ENCODE measurements at regions of chr9 and their contacts with region 1.

Region 1: GRCh38 chr9:38088006-38088925 is 19.2 kb upstream of the SHB start:
- DNase-seq: peak; percentile 82
- H3K4me3 ChIP-seq: no peak overlapping the region
- H3K27ac ChIP-seq: no peak overlapping the region
- H3K4me1 ChIP-seq: peaks cover 0 to 3% (median 0%) of the 10 kb centered on the region in 4 donors
- H3K27me3 ChIP-seq: no peaks in the 10 kb centered on the region
- CTCF ChIP-seq: peak; percentile 90 to 99 (median 96)
- EP300 ChIP-seq: no peak
- POLR2A ChIP-seq: no peak

Region 2: DNA sequence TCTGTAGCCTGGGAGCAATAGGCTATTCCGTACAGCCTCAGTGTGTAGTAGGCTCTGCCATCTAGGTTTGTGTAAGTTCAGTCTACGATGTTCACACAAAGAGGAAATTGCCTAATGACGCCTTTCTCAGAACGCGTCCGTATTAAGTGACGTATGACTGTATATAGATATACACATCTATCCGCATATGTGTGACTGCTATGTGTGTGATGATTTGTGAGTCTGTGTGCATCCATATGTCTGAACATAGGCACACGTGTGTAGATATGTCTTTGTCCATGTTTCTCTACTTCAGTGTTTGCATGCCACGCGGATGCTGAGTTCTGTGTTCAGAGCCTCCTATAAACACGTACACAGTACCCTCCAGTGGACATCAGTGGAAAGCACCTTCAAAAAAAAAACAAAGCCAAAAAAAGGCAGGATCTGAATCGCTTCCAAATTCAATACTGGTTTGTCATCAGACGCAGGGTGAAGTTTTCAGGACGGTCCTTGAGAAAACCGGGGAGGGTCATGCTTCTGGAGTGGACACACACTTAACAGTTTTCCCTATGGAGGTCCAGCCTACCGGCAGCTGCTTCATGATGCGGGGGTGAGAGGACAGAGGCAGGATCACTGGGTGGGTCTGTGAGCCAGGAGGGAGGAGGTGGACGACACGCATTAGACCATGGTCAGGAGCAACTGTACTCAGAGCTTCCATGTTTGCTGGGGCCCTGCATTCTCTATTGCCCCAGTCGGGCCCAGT is 274.8 kb after region 1 on chr9:
- in situ Hi-C with region 1: loop called in 3 of 4 experiments (anchors 25 kb)
- intact Hi-C with region 1: no loop called
- DNase-seq: peak; percentile 22
- H3K4me3 ChIP-seq: no peak overlapping the region
- H3K27ac ChIP-seq: no peak overlapping the region
- H3K4me1 ChIP-seq: peaks cover 0 to 7% (median 1%) of the 10 kb centered on the region in 4 donors
- H3K27me3 ChIP-seq: no peaks in the 10 kb centered on the region
- CTCF ChIP-seq: peak; percentile 38 to 55 (median 46)
- EP300 ChIP-seq: no peak
- POLR2A ChIP-seq: no peak

Region 3: GRCh38 chr9:38417003-38417945 is 329.0 kb after region 1 on chr9:
- in situ Hi-C with region 1: loop called in 1 of 4 experiments (anchors 25 kb)
- intact Hi-C with region 1: no loop called
- DNase-seq: peak; percentile 35
- H3K4me3 ChIP-seq: no peak overlapping the region
- H3K27ac ChIP-seq: no peak overlapping the region
- H3K4me1 ChIP-seq: no peaks in the 10 kb centered on the region
- H3K27me3 ChIP-seq: peaks cover 10% of the 10 kb centered on the region
- CTCF ChIP-seq: peak in 3 of 5 experiments; percentile 26 to 46 (median 39)
- EP300 ChIP-seq: no peak
- POLR2A ChIP-seq: no peak

Measured in transverse colon (tissue), 4 donors.